ENCODE measurements at regions of chr11 and their contacts with region 1.

Region 1: GRCh38 chr11:1515082-1516060 is 28.8 kb upstream of the MOB2 start:
- DNase-seq: peak; percentile 75
- ATAC-seq: peak; percentile 84
- H3K4me3 ChIP-seq: no peak overlapping the region
- H3K4me3 Mint-ChIP-seq: peak overlapping the region; percentile 23
- H3K27ac ChIP-seq: no peak overlapping the region
- H3K27ac Mint-ChIP-seq: no peak overlapping the region
- H3K4me1 ChIP-seq: peaks cover 9 to 17% of the 10 kb centered on the region in 2 donors
- H3K4me1 Mint-ChIP-seq: peaks cover 53% of the 10 kb centered on the region
- H3K27me3 ChIP-seq: no peaks in the 10 kb centered on the region
- H3K27me3 Mint-ChIP-seq: no peaks in the 10 kb centered on the region
- CTCF ChIP-seq: peak; percentile 86

Region 2: DNA sequence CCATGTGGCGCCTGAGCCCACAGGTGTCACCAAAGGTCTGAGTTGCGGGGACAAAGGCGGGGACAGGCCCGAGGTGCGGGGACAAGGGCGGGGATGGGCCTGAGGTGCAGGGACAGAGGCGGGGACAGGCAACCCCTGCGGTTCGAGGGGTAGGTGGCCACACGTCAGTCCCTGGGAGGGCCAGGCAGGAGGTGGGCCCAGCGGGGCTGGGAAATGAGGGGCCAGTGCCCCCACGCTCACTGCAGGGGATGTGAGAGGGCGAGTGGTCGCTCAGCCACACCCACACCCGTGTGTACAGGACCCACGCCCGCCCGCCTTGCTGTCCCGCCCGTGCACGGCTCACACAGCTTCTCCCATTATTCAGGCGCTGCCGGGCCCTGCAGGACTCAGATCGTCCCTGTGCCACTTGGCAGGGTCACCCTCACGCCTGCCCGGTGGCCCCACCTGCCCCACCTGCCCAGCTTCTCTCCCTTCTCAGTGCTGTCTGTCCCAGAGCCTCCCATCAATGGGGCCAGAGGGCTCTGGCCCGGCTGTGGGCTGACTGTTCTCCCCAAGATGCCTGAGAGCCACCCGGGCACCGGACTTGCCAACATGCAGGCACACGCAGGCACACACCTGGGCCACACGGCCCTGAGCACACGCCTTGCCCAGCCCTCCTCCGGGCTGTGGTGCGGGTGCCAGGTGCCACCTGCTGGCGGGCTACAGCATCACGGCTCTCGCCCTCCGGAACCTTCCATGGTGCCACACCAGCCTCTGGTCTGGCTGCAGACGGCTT is 464.6 kb before region 1 on chr11:
- CTCF ChIA-PET with region 1: no interaction called
- POLR2A ChIA-PET with region 1: no interaction called
- intact Hi-C with region 1: no loop called
- DNase-seq: peak; percentile 77
- ATAC-seq: peak; percentile 96
- H3K4me3 ChIP-seq: no peak overlapping the region
- H3K4me3 Mint-ChIP-seq: no peak overlapping the region
- H3K27ac ChIP-seq: no peak overlapping the region
- H3K27ac Mint-ChIP-seq: no peak overlapping the region
- H3K4me1 ChIP-seq: peaks cover 4 to 6% of the 10 kb centered on the region in 2 donors
- H3K4me1 Mint-ChIP-seq: peaks cover 3% of the 10 kb centered on the region
- H3K27me3 ChIP-seq: peaks cover 0 to 27% (median 3%) of the 10 kb centered on the region in 4 experiments
- H3K27me3 Mint-ChIP-seq: peaks cover 15% of the 10 kb centered on the region
- CTCF ChIP-seq: peak; percentile 79

Region 3: DNA sequence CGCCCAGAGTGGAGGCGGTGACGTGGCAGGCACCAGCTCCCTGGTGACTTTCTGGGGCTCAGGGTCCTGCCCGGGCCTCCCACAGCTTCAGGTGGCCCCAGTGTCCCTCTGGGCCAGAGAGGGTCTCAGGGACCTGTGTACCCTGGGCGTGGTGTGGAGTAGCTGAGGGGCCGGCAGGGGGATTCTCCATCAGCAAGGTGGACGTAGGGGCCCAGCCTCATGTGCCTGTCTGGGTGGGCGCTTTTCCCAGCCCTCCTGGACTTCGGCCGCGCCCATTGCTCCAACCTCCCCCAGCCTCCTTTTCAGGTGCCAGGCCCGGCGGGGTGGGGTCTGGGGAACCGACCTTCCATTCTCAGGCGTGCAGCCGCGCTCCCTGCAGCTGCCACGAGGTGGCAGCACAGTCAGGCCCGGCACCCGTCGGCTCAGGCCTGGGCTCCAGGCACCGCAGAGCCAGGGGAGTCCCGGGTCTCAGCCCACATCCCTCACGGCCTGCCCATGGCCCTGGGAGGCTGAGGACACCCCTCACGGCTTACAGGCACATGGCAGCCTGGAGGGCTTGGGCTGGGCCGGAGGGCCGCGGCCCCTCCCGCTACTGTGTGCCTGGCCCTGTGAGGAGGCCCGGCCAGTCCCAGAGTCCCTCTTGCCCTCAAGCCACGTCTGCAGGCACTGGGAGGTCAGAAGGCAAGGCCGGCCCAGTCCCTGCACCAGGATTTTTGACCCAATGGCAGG is 312.4 kb before region 1 on chr11:
- CTCF ChIA-PET with region 1: interaction called, 17 read pairs
- POLR2A ChIA-PET with region 1: no interaction called
- intact Hi-C with region 1: no loop called
- DNase-seq: peak; percentile 77
- ATAC-seq: peak; percentile 90
- H3K4me3 ChIP-seq: no peak overlapping the region
- H3K4me3 Mint-ChIP-seq: no peak overlapping the region
- H3K27ac ChIP-seq: no peak overlapping the region
- H3K27ac Mint-ChIP-seq: no peak overlapping the region
- H3K4me1 ChIP-seq: peaks cover 0 to 6% of the 10 kb centered on the region in 2 donors
- H3K4me1 Mint-ChIP-seq: no peaks in the 10 kb centered on the region
- H3K27me3 ChIP-seq: peaks cover 0 to 13% (median 0%) of the 10 kb centered on the region in 4 experiments
- H3K27me3 Mint-ChIP-seq: no peaks in the 10 kb centered on the region
- CTCF ChIP-seq: peak; percentile 86

Region 4: DNA sequence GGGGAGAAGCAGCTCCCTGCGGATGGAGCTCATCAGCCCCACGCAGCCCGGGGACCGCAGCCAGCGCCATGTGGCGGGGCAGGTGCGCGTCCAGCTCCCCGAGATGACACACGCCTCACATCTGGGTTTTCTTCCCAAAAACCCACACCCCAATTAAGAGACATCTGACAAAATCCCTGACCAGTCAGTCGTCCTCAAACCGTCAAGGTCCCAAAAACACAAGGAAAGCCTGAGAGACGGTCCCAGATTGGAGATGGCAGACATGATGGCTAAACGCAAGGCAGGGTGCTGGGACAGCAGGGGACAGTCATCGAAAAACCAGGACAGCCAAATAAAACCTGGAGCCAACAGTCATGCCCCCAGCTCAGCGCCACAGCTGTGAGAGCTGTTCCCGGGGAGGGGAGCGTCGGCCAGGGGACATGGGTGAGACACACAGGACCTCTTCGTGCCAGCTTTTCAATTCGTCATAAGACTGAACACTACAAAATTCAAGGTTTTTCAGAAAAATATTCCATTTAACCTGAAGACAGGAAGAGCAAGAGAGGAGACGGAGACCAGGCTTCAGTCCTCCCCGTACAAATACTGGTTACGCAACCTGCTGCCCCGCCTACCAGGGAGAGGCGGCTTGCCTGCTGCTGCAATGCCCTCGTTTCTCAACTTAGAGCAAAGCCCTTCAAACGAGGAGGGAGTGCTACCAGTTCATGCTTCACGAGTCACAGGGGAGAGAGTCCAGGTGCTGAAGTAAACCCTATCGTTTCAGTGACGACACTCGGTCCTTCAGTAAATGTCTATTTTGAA is 216.5 kb before region 1 on chr11:
- CTCF ChIA-PET with region 1: interaction called, 6 read pairs
- POLR2A ChIA-PET with region 1: no interaction called
- intact Hi-C with region 1: loop called (anchors 10 kb)
- DNase-seq: no peak
- ATAC-seq: no peak
- H3K4me3 ChIP-seq: no peak overlapping the region
- H3K4me3 Mint-ChIP-seq: no peak overlapping the region
- H3K27ac ChIP-seq: no peak overlapping the region
- H3K27ac Mint-ChIP-seq: no peak overlapping the region
- H3K4me1 ChIP-seq: no peaks in the 10 kb centered on the region
- H3K4me1 Mint-ChIP-seq: peaks cover 11% of the 10 kb centered on the region
- H3K27me3 ChIP-seq: no peaks in the 10 kb centered on the region
- H3K27me3 Mint-ChIP-seq: no peaks in the 10 kb centered on the region
- CTCF ChIP-seq: no peak

Measured in B cell (primary cell).